Activated CD4-positive, alpha-beta T cell treated with anti-CD3 and anti-CD28 coated beads for 36 hours (primary cell): ENCODE measurements at regions of chr16 and their contacts with region 1.

Region 1: DNA sequence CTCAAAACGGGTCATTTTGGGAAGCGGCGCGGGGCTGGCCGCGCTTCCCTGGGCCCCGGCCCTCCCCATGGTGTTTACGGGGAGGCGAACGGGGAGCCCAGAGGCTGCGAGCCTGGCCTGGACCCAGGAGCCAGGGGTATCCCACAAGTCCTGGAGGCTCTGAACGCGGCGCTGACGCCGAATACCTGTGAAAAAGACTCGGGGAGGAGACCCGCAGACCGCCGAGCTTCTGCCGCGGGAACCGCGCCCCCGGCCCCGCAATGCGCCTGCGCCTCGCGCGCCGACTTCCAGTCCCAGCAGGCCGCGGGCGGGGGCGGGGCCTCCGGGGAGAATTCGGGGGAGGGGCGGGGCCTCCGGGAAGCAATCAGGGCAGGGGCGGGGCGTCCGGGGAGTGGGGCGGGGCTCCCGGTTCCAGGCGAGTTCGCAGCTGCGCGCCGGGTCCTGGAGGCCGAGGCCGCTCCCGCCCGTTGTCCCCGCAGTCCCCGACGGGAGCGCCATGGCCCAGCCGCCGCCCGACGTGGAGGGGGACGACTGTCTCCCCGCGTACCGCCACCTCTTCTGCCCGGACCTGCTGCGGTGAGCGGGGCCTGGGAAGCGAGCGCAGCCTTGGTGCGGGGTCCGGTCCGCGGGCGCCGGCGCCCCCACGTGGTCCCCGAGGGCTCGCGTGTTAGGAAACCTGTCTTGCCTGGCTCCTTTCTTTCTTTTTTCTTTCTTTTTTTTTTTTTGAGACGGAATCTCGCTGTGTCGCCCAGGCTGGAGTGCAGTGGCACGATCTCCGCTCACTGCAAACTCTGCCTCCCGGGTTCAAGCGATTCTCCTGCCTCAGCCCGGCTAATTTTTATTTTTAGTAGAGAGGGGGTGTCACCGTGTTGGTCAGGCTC is at the start of gene DECR2:
- DNase-seq: peak; percentile 100
- ATAC-seq: peak; percentile 87
- H3K4me3 Mint-ChIP-seq: peak within 1 kb of the TSS; percentile 82
- H3K27ac Mint-ChIP-seq: peak within 1 kb of the TSS; percentile 87
- H3K4me1 Mint-ChIP-seq: peaks cover 10% of the 10 kb centered on the region
- H3K27me3 Mint-ChIP-seq: no peaks in the 10 kb centered on the region
- total RNA-seq, gene DECR2: 11.5 to 13.0 TPM

Region 2: DNA sequence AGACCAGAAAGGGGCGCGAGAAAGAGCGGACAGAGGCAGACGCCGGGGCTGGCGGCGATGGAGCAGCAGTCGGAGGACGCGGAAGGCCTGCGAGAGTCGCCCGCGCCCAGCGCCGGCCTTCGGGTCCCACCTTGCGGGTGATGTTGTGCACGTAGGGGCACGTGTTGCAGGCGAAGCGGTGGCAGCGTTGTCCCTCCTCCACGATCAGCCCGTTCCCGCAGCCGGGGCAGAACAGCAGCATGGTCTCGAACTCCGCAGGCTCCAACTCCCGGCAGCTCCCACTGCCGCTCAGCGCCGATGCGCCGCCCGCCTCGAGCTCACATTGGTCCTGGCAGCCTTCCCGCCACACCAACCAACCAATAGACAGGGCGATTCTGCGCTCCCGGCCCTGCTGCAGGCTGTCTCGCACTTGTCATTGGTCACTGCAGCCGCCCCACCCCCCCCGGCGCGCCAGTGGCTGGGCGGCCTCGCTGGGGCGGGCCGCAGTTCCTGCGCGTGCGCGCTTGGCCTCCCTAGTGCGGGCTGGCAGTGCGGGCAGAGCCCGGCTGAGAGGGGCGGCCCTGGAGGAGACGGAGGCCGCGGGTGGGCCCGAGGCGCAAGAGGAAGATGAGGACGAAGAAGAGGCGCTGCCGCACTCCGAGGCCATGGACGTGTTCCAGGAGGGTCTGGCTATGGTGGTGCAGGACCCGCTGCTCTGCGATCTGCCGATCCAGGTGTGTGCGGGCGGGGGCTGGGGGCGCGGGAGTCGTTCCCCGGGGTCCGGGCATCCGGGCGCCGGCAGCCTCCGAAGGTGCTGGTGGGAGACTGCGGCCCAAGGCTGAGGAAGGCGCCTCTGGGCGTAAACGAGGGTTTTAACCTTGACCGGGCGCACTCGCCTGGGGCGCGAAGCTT is 348.1 kb before region 1 on chr16 and contains the starts of genes POLR3K and SNRNP25:
- CTCF ChIA-PET with region 1: no interaction called
- POLR2A ChIA-PET with region 1: no interaction called
- intact Hi-C with region 1: no loop called
- DNase-seq: peak; percentile 100
- ATAC-seq: peak; percentile 98
- H3K4me3 Mint-ChIP-seq: peak within 1 kb of the TSS; percentile 94
- H3K27ac Mint-ChIP-seq: peak within 1 kb of the TSS; percentile 90
- H3K4me1 Mint-ChIP-seq: peaks cover 30% of the 10 kb centered on the region
- H3K27me3 Mint-ChIP-seq: no peaks in the 10 kb centered on the region
- total RNA-seq, gene POLR3K: 31.9 to 46.8 TPM
- total RNA-seq, gene SNRNP25: 42.5 to 50.0 TPM

Region 3: GRCh38 chr16:228818-229730 is 172.6 kb before region 1 on chr16 and contains the start of gene LUC7L:
- CTCF ChIA-PET with region 1: no interaction called
- POLR2A ChIA-PET with region 1: no interaction called
- intact Hi-C with region 1: loop called in 1 of 2 experiments (anchors 1 kb)
- DNase-seq: peak; percentile 93
- ATAC-seq: peak; percentile 90
- H3K4me3 Mint-ChIP-seq: peak within 1 kb of the TSS; percentile 92
- H3K27ac Mint-ChIP-seq: peak within 1 kb of the TSS; percentile 85
- H3K4me1 Mint-ChIP-seq: peaks cover 30% of the 10 kb centered on the region
- H3K27me3 Mint-ChIP-seq: no peaks in the 10 kb centered on the region
- total RNA-seq, gene LUC7L: 44.6 to 50.1 TPM

Region 4: GRCh38 chr16:370443-370842 is 31.3 kb before region 1 on chr16 and contains the start of gene MRPL28:
- CTCF ChIA-PET with region 1: no interaction called
- POLR2A ChIA-PET with region 1: no interaction called
- intact Hi-C with region 1: loop called in 1 of 2 experiments (anchors 1 kb)
- DNase-seq: peak; percentile 97
- ATAC-seq: peak; percentile 100
- H3K4me3 Mint-ChIP-seq: peak within 1 kb of the TSS; percentile 78
- H3K27ac Mint-ChIP-seq: peak within 1 kb of the TSS; percentile 92
- H3K4me1 Mint-ChIP-seq: peaks cover 17% of the 10 kb centered on the region
- H3K27me3 Mint-ChIP-seq: no peaks in the 10 kb centered on the region
- total RNA-seq, gene MRPL28: 90.2 to 94.4 TPM

Region 5: DNA sequence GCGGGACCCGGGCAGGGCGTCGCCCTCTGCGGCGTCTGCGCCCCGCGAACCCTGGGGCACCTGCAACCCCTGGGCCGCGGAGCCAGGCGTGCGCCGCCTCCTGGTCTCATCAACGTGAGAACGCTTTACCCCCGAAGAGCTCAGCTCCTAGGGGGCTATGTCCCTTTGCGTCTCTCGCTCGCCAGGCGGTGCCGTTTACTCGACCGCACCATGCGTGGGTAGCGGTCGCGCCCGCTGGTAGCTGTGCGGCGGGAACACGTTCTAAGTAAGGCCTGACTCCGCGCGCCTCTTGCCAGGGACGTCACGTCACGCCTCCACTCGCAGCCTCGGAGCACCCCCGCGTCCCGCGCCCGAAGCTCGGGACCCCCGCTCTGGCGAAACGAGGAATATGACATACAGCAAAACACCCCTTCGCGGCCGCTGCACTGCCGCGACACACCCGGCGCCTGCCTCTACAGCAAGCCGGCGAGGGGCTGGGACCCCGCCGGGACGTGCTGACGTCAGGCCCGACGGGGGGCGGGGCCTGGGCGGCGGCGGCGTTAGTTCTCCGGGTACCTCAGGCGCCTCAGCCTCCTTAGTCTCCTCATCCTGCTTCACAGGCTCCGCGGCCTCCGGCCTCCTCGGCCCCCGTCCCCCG is 23.5 kb after region 1 on chr16 and contains the start of gene RAB11FIP3:
- CTCF ChIA-PET with region 1: interaction called, 4 read pairs
- POLR2A ChIA-PET with region 1: no interaction called
- intact Hi-C with region 1: loop called in 1 of 2 experiments (anchors 1 kb)
- DNase-seq: peak; percentile 90
- ATAC-seq: peak; percentile 93
- H3K4me3 Mint-ChIP-seq: peak within 1 kb of the TSS; percentile 74
- H3K27ac Mint-ChIP-seq: peak within 1 kb of the TSS; percentile 47
- H3K4me1 Mint-ChIP-seq: peaks cover 30% of the 10 kb centered on the region
- H3K27me3 Mint-ChIP-seq: peaks cover 5% of the 10 kb centered on the region
- total RNA-seq, gene RAB11FIP3: 14.2 to 17.0 TPM

Region 6: DNA sequence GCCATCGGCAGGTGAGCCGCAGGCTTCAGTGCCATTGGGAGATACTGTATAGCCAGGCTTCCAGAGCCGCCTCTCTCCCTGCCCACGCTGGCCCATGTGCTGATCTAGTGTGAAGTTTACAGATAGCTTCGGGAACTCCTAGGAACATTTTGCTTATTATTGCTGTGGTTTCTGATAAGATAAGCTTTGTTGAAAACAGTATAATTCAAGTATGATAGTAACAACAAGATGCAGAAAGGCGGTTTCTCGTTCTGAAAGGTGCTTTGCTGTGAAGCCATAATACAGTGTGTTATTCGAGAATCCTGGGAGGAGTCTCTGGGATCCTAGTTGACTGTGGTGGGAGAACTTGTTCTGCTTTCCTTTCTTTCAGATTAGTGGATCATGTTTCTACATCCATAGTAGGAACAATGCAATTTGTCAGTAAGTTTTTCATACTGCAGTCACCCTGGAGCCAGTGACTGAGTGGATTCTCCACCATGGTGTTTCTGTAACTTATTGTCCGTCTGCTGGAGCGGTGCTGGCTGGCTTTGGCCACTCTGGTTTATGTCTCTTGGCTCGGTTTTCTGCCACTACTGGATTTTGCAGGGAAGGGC is 55.3 kb after region 1 on chr16:
- CTCF ChIA-PET with region 1: no interaction called
- POLR2A ChIA-PET with region 1: no interaction called
- intact Hi-C with region 1: no loop called
- DNase-seq: no peak
- ATAC-seq: no peak
- H3K4me3 Mint-ChIP-seq: no peak overlapping the region
- H3K27ac Mint-ChIP-seq: no peak overlapping the region
- H3K4me1 Mint-ChIP-seq: peaks cover 5% of the 10 kb centered on the region
- H3K27me3 Mint-ChIP-seq: no peaks in the 10 kb centered on the region

Region 7: GRCh38 chr16:626787-627186 is 225.1 kb after region 1 on chr16:
- CTCF ChIA-PET with region 1: no interaction called
- POLR2A ChIA-PET with region 1: no interaction called
- intact Hi-C with region 1: no loop called
- DNase-seq: peak; percentile 28
- ATAC-seq: no peak
- H3K4me3 Mint-ChIP-seq: no peak overlapping the region
- H3K27ac Mint-ChIP-seq: no peak overlapping the region
- H3K4me1 Mint-ChIP-seq: no peaks in the 10 kb centered on the region
- H3K27me3 Mint-ChIP-seq: no peaks in the 10 kb centered on the region

Region 8: GRCh38 chr16:667780-668518 is 266.2 kb after region 1 on chr16 and contains the start of gene RHOT2:
- CTCF ChIA-PET with region 1: no interaction called
- POLR2A ChIA-PET with region 1: no interaction called
- intact Hi-C with region 1: loop called in 1 of 2 experiments (anchors 2 kb)
- DNase-seq: peak; percentile 96
- ATAC-seq: peak; percentile 98
- H3K4me3 Mint-ChIP-seq: peak within 1 kb of the TSS; percentile 76
- H3K27ac Mint-ChIP-seq: peak within 1 kb of the TSS; percentile 85
- H3K4me1 Mint-ChIP-seq: peaks cover 6% of the 10 kb centered on the region
- H3K27me3 Mint-ChIP-seq: no peaks in the 10 kb centered on the region
- total RNA-seq, gene RHOT2: 123 to 130 TPM